Mucosa of descending colon (tissue), 3 donors: ENCODE measurements at regions of chr1 and their contacts with region 1.

Region 1: GRCh38 chr1:115771847-115772457 is 3.4 kb upstream of the CASQ2 start:
- DNase-seq: peak in 2 of 3 donors; percentile 32 to 63
- ATAC-seq: peak; percentile 92
- H3K4me3 ChIP-seq: no peak overlapping the region
- H3K4me1 ChIP-seq: no peaks in the 10 kb centered on the region
- CTCF ChIP-seq: peak; percentile 53

Region 2: GRCh38 chr1:115609021-115609420 is 162.9 kb before region 1 on chr1:
- intact Hi-C with region 1: loop called in 1 of 2 experiments (anchors 5 kb)
- DNase-seq: no peak
- ATAC-seq: no peak
- H3K4me3 ChIP-seq: no peak overlapping the region
- H3K4me1 ChIP-seq: no peaks in the 10 kb centered on the region
- CTCF ChIP-seq: no peak

Region 3: GRCh38 chr1:115717541-115717940 is 54.4 kb before region 1 on chr1:
- intact Hi-C with region 1: loop called in 1 of 2 experiments (anchors 5 kb)
- DNase-seq: peak in 2 of 3 donors; percentile 46 to 69
- ATAC-seq: no peak
- H3K4me3 ChIP-seq: no peak overlapping the region
- H3K4me1 ChIP-seq: no peaks in the 10 kb centered on the region
- CTCF ChIP-seq: no peak